Dorsolateral prefrontal cortex (tissue), 120 donors: ENCODE measurements at regions of chr21 and their contacts with region 1.

Region 1: DNA sequence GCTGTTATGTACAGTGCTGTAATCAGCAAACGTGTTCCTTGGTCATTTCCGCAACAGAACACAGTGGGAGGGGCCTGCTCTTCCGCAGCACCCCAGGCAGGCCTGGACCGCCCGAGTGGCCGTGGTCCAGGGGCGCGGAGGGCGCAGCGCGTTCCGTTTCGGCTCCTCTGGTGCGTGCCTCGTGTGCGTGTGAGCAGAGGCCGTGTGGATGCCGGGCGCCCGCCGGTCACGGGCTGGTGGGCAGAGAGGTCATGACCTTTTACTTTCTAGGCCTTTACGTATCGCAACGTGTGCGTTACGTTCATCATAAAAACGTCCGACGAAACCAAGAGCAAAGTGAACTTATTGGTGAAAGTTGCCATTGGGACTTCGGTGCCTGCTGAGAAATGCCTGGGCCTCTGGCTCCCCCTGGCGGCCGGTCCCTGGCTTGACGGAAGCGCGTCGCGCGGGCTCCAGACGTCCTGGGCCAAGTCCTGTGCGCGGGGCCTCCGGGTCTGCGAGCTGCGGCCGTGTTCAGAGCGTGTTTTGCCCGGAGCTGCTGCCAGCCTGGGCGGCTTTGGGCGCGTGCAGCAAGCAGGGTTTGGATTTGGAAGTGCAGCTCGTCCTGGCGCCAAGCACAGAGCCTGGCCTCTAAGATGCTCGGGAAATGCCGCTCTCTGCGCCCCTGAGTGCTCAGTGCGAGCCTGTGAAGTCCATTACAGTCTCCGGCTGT is 34.4 kb downstream of the COL18A1 start:
- DNase-seq: peak in 9 of 10 donors; percentile 71 to 87 (median 81)
- H3K4me3 ChIP-seq: peak overlapping the region in 46 of 59 donors; percentile 16 to 57 (median 36)
- H3K27ac ChIP-seq: peak overlapping the region in 33 of 59 donors; percentile 6 to 86 (median 55)
- H3K27me3 ChIP-seq: peaks cover 0 to 11% (median 0%) of the 10 kb centered on the region in 45 donors
- CTCF ChIP-seq: peak; percentile 89 to 100 (median 99)

Region 2: GRCh38 chr21:45140346-45140940 is 298.9 kb before region 1 on chr21:
- intact Hi-C with region 1: loop called (anchors 5 to 10 kb)
- DNase-seq: peak; percentile 47 to 84 (median 76)
- H3K4me3 ChIP-seq: no peak overlapping the region
- H3K27ac ChIP-seq: no peak overlapping the region
- H3K27me3 ChIP-seq: no peaks in the 10 kb centered on the region
- CTCF ChIP-seq: peak in 55 of 56 donors; percentile 24 to 87 (median 77)

Region 3: DNA sequence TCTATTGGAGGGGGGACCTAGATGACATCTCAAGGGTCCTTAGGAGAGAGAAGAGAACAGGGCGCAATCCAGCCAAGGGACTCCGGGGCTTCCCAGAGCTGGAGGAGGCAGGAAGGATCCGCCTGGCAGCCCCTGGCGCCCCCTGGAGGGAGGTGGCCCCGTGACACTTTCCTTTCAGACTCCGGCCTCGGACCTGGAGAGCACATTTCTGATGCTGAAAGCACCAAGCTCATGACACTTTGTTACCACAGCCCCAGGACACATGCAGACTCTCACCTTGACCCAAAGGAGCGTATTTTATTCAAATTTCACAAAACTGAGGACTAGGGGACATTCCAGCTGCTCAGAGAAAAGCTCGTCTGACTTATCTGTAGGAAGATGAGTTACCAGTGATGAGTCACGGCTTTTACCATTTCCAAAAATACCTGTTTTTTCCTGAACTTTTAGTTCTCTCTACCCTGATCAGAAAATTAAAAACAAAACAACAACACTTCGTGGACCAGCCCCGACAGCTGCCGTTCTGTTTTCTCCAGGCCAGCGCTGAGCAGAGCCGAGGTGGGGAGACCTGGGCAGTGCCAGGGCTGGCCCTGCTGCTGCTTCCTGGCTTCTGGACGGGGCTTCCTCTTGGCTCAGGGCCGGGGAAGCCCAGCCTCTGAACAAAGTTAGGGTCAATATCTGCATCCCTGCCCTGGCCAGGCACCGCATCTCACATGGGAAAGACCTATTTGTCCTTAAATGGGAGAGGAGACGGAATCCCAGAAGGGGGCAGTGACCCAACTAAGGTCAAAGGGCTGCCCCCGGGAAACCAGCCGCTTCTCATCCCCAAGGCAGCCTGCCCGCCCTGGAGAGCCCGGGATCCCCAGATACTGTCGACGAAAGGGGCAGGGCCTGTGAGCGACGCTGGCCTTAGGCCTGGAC is 130.0 kb before region 1 on chr21:
- intact Hi-C with region 1: loop called in 1 of 2 experiments (anchors 5 kb)
- DNase-seq: peak in 6 of 10 donors; percentile 33 to 62 (median 46)
- H3K4me3 ChIP-seq: no peak overlapping the region
- H3K27ac ChIP-seq: peak overlapping the region in 35 of 59 donors; percentile 9 to 75 (median 37)
- H3K27me3 ChIP-seq: peaks cover 0 to 4% (median 0%) of the 10 kb centered on the region in 45 donors
- CTCF ChIP-seq: peak in 55 of 56 donors; percentile 20 to 68 (median 51)

Region 4: DNA sequence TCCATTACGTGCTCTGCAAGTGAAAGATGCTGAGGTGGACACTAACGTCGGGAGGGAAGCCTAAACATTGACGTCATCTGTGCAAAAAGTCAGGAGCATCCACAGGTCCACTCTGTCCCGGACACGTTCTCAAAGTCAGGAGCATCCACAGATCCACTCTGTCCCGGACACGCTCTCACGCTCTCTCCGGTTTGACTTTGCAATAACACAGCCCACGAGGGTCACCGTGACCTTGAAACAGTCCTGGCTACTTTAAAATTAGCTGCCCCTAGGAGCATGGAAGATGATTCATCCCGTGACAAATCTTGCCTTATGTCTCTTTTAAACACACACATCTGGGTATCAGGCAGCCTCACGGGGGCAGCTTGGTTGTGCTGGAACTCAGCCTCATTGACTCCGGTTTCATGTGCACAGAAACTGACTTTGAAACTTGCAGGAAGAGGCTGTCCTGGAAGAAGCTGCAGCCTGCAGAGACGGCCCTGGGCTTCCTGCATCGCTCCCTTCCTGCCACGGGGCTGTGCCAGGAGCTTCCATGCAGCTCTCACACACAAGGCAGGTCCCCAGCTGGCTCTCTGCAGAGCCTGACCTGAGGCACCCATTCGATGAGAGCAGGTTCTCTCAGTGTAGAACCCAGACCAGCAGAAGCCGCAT is 52.5 kb before region 1 on chr21:
- intact Hi-C with region 1: no loop called
- DNase-seq: peak in 2 of 10 donors; percentile 43 to 50
- H3K4me3 ChIP-seq: no peak overlapping the region
- H3K27ac ChIP-seq: peak overlapping the region in 8 of 59 donors; percentile 17 to 60 (median 30)
- H3K27me3 ChIP-seq: peaks cover 0 to 47% (median 5%) of the 10 kb centered on the region in 45 donors
- CTCF ChIP-seq: no peak

Region 5: DNA sequence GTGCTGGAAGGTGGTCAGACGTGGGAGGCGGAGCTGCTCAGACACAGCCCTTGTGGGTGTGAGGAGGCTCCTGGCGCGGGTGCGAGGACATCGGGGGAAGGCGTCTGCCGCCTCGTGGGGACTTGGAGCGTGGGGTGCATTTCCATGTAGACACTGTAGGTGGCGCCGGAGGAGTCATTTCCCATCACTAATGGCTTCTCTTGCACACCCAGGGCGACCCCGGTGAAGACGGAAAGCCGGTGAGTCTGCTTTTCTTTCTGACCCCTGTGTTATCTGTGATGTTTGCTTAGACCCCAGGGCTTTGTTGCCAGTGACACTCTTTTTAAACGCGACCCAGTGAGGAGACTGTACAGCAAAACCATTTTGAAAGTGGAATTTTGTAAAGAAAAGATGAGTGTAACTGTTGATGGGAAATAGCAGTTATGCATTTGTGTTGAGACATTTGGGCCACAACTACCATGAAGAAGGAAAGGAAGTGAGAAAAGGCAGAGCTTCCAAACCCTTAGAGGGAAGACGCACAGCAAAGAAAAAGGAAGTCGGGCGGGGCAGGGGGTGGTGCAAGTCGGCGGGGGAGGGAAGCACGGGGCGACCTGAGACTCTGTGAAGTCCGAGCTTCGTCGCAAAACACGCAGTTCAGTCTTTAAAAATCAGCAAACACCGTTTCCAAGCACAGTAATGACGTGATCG is 38.9 kb after region 1 on chr21:
- intact Hi-C with region 1: loop called (anchors 2 to 5 kb)
- DNase-seq: peak in 9 of 10 donors; percentile 61 to 79 (median 74)
- H3K4me3 ChIP-seq: peak overlapping the region in 44 of 59 donors; percentile 4 to 56 (median 33)
- H3K27ac ChIP-seq: peak overlapping the region in 36 of 59 donors; percentile 2 to 73 (median 52)
- H3K27me3 ChIP-seq: no peaks in the 10 kb centered on the region
- CTCF ChIP-seq: peak; percentile 52 to 91 (median 82)

Region 6: DNA sequence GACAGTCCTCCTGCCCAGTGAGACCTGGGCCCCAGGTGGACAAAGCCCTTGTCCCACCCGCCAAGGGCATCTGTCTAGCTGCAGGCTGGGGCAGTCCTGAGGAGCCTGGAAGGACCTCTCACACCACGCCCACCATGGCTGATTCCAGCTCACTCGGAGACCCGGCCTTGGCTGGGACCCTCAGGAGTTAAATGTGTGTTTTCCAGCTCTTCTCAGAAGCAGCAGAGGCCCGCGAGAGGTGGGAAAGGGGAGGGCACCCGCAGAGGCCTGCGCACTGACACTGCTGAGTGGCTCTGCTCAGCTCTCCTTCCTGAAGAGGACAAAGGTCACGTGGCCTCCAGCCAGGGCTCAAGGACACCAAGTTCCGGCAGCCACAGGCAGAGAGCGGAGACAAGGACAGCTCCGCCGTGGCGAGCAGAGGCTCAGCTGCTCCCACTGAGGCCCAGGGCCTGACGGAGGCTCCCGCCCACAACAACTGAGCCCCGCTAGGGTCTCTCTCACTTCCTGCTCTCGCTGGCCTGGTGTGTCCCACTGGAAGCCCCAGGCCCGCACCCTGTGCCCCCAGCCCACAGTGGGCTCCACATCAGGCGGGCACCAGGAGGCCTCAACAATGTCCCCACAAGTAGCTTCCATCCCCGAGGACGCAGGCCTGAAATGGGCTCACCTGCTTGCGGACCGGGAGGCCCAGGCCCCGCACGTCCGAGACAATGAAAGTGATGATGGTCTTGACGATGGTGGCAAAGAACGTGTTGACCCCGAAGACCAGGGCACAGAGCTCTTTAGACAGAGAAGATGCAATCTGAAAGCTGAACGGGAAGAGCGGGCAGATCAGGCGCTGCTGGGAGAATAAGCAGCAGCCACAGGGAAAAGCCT is 86.1 kb after region 1 on chr21:
- intact Hi-C with region 1: no loop called
- DNase-seq: peak in 5 of 10 donors; percentile 2 to 41 (median 34)
- H3K4me3 ChIP-seq: no peak overlapping the region
- H3K27ac ChIP-seq: peak overlapping the region in 2 of 59 donors; percentile 4 to 14
- H3K27me3 ChIP-seq: no peaks in the 10 kb centered on the region
- CTCF ChIP-seq: no peak